Left colon (tissue), 2 donors: ENCODE measurements at regions of chr1 and their contacts with region 1.

Region 1: DNA sequence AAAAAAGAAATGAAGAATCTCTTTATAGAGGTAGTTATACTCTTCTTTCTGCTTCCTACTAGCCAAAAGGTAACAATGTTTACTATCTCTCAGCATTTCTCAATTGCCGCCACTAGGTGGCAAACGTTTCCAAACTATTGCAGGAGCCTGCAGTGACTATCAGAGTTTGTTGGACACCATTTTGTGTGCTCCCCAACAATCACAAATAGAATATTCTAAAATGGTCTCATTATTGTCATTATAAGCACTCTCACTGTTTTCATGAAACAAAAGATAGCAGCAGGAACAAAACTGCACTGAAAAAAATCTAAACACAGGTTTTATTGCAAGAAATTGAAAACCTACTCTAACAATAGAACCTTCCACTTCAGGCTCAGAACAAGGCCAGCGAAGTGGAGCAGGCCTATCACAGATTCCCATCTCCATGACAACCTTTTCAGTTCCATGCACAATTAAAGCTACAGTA is 83.9 kb upstream of the PLPPR4 start:
- DNase-seq: peak; percentile 48 to 75
- ATAC-seq: peak; percentile 84

Region 2: DNA sequence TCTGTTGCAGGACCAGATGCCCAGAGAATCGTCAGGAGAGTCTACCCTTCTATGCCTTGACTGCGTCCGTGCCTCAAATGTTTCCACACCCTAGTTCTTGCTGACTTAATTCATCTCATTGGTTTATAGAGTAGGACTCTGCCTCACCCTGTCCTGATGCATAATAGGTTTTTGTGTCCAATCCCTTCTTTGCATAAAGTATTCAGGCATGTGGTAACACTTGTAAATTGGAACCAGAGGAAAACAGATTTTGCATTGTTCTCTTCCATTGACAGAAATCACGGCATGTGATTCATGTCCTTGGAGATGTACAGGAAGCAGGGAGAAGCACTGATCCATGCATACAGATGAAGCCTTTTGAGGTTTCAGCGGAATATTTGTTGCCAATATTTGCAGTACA is 205.3 kb before region 1 on chr1:
- intact Hi-C with region 1: no loop called
- DNase-seq: no peak
- ATAC-seq: no peak

Region 3: GRCh38 chr1:99218999-99219398 is 38.6 kb after region 1 on chr1:
- intact Hi-C with region 1: no loop called
- DNase-seq: no peak
- ATAC-seq: no peak

Region 4: DNA sequence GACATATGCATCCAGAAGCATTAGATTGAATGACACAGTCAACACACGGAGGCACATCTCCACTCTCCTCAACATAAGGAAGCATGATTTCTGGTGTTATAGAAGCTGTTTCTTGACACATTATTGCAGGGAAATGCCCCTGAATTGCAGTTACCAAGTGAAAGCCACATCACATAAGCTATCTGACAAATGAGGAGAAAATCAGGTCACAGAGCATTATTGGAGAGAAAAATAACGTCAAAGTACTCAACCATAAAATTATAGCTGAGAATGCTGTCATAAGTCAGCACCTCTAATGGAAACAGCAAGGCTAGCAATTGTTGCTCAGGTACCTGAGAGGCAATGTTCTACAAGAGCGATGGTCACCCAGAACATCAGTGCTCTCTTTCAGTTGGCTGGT is 295.7 kb after region 1 on chr1:
- intact Hi-C with region 1: loop called in 1 of 2 experiments (anchors 5 kb)
- DNase-seq: no peak
- ATAC-seq: no peak

Region 5: GRCh38 chr1:99707535-99708142 is 527.3 kb after region 1 on chr1:
- intact Hi-C with region 1: loop called in 1 of 2 experiments (anchors 5 kb)
- DNase-seq: peak; percentile 40 to 78
- ATAC-seq: peak; percentile 83